ENCODE measurements at regions of chr16 and their contacts with region 1.

Region 1: GRCh38 chr16:85327731-85328675 is 215.7 kb upstream of the CIBAR2 start:
- DNase-seq: peak; percentile 99
- H3K4me3 ChIP-seq: peak overlapping the region; percentile 20
- H3K27ac ChIP-seq: peak overlapping the region; percentile 86
- H3K4me1 ChIP-seq: peaks cover 43% of the 10 kb centered on the region
- H3K27me3 ChIP-seq: no peaks in the 10 kb centered on the region
- CTCF ChIP-seq: no peak

Region 2: DNA sequence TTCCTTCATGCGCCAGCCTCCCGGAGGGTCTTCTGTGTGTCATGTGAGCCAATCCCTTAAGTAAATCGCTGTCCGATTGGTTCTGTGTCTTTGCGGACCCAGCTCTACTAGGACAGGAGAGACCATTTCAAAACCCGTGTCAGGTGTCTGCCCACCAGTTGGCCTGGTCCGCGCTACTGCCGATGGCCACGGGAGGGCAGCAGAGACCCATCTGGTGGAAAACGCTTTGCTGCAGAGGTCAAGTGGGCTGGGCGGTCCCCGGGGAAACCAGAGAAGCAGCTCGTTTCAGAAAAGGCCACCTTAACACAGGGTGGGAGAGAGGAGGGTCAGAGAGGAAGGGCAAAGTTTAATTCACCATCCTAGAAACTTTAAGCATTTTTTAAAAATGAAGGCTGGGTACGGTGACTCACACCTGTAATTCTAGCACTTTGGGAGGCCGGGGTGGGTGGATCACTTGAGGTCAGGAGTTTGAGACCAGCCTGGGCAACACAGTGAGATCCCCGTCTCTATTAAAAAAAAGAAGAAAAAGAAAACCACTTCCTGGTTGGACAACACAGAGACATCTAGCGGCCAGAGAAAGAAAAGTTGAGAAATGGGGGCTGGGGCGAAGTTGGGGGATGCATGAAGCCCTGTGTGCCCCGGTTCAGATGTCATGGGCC is 213.0 kb before region 1 on chr16:
- CTCF ChIA-PET with region 1: interaction called, 5 read pairs
- POLR2A ChIA-PET with region 1: no interaction called
- intact Hi-C with region 1: loop called (anchors 5 kb)
- DNase-seq: peak; percentile 83
- H3K4me3 ChIP-seq: peak overlapping the region; percentile 18
- H3K27ac ChIP-seq: peak overlapping the region; percentile 55
- H3K4me1 ChIP-seq: peaks cover 4% of the 10 kb centered on the region
- H3K27me3 ChIP-seq: no peaks in the 10 kb centered on the region
- CTCF ChIP-seq: peak; percentile 98

Region 3: DNA sequence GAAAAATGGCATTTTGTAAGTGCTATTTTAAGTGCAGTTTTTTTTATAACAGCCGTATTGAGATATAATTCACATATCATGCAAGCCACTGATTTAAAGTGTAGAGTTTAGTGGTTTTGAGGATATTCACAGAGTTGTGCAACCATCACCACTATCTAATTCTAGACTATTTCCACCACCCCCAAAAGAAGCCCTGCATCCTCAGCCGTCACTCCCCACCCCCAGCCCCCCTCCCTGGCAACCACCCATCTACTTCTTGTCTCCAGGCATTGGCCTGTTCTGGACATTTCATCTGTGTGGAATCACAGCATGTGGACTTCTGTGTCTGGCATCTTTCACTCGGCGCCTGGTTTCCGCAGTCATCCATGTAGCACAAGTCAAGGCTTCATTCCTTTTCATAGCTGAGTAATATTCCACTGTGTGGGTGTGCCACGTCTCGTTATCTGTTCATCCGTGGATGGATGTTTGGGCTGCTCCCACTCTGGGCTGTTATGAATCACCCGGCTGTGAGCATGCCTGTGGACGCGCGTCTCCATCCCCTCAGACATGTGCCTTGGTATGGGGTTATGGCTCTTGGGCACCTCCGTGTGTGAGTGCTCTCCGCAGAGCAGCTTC is 77.3 kb before region 1 on chr16:
- CTCF ChIA-PET with region 1: no interaction called
- POLR2A ChIA-PET with region 1: no interaction called
- intact Hi-C with region 1: no loop called
- DNase-seq: no peak
- H3K4me3 ChIP-seq: no peak overlapping the region
- H3K27ac ChIP-seq: no peak overlapping the region
- H3K4me1 ChIP-seq: peaks cover 56% of the 10 kb centered on the region
- H3K27me3 ChIP-seq: no peaks in the 10 kb centered on the region
- CTCF ChIP-seq: no peak

Region 4: GRCh38 chr16:85275533-85276249 is 52.3 kb before region 1 on chr16:
- CTCF ChIA-PET with region 1: interaction called, 10 read pairs
- POLR2A ChIA-PET with region 1: no interaction called
- intact Hi-C with region 1: no loop called
- DNase-seq: peak; percentile 74
- H3K4me3 ChIP-seq: no peak overlapping the region
- H3K27ac ChIP-seq: no peak overlapping the region
- H3K4me1 ChIP-seq: no peaks in the 10 kb centered on the region
- H3K27me3 ChIP-seq: no peaks in the 10 kb centered on the region
- CTCF ChIP-seq: peak; percentile 95

Measured in A673 (cell line).